Activated CD8-positive, alpha-beta T cell treated with anti-CD3 and anti-CD28 coated beads for 36 hours (primary cell): ENCODE measurements at regions of chr4 and their contacts with region 1.

Region 1: GRCh38 chr4:17544205-17544604 is 29.2 kb downstream of the CLRN2 start:
- DNase-seq: no peak
- ATAC-seq: no peak
- H3K4me3 Mint-ChIP-seq: no peak overlapping the region
- H3K27ac Mint-ChIP-seq: no peak overlapping the region
- H3K4me1 Mint-ChIP-seq: peaks cover 3% of the 10 kb centered on the region
- H3K27me3 Mint-ChIP-seq: peaks cover 5% of the 10 kb centered on the region
- CTCF ChIP-seq: no peak

Region 2: DNA sequence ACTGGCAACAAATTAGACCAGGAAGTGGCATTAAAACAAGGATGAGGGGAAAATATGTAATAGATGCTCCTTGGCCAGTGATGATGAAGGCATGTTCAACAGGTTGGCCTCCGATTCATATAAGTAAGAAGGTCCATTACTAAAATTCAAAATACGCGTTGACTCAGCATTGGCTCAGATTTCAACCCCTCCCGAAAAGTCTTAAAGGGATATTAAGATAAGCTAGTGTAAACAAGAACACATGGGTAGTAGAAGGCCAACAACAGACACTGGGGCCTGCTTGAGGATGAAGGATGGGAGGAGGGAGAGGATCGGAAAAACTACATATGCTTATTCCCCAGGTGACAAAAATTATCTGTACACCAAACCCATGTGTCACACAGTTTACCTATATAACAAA is 13.7 kb after region 1 on chr4:
- CTCF ChIA-PET with region 1: interaction called, 18 read pairs
- POLR2A ChIA-PET with region 1: no interaction called
- intact Hi-C with region 1: no loop called
- DNase-seq: no peak
- ATAC-seq: no peak
- H3K4me3 Mint-ChIP-seq: no peak overlapping the region
- H3K27ac Mint-ChIP-seq: no peak overlapping the region
- H3K4me1 Mint-ChIP-seq: no peaks in the 10 kb centered on the region
- H3K27me3 Mint-ChIP-seq: peaks cover 9% of the 10 kb centered on the region
- CTCF ChIP-seq: no peak

Region 3: GRCh38 chr4:17576932-17577665 is 32.9 kb after region 1 on chr4 and contains the start of gene LAP3:
- CTCF ChIA-PET with region 1: interaction called, 15 read pairs
- POLR2A ChIA-PET with region 1: no interaction called
- intact Hi-C with region 1: no loop called
- DNase-seq: peak; percentile 97
- ATAC-seq: peak; percentile 88
- H3K4me3 Mint-ChIP-seq: peak within 1 kb of the TSS; percentile 94
- H3K27ac Mint-ChIP-seq: peak within 1 kb of the TSS; percentile 93
- H3K4me1 Mint-ChIP-seq: peaks cover 23% of the 10 kb centered on the region
- H3K27me3 Mint-ChIP-seq: no peaks in the 10 kb centered on the region
- CTCF ChIP-seq: no peak
- total RNA-seq, gene LAP3: 100 to 101 TPM

Region 4: GRCh38 chr4:17636696-17637622 is 92.8 kb after region 1 on chr4:
- CTCF ChIA-PET with region 1: interaction called, 80 read pairs
- POLR2A ChIA-PET with region 1: interaction called, 4 read pairs
- intact Hi-C with region 1: loop called (anchors 2 kb)
- DNase-seq: peak; percentile 83
- ATAC-seq: peak; percentile 90
- H3K4me3 Mint-ChIP-seq: no peak overlapping the region
- H3K27ac Mint-ChIP-seq: no peak overlapping the region
- H3K4me1 Mint-ChIP-seq: no peaks in the 10 kb centered on the region
- H3K27me3 Mint-ChIP-seq: no peaks in the 10 kb centered on the region
- CTCF ChIP-seq: peak; percentile 97

Region 5: DNA sequence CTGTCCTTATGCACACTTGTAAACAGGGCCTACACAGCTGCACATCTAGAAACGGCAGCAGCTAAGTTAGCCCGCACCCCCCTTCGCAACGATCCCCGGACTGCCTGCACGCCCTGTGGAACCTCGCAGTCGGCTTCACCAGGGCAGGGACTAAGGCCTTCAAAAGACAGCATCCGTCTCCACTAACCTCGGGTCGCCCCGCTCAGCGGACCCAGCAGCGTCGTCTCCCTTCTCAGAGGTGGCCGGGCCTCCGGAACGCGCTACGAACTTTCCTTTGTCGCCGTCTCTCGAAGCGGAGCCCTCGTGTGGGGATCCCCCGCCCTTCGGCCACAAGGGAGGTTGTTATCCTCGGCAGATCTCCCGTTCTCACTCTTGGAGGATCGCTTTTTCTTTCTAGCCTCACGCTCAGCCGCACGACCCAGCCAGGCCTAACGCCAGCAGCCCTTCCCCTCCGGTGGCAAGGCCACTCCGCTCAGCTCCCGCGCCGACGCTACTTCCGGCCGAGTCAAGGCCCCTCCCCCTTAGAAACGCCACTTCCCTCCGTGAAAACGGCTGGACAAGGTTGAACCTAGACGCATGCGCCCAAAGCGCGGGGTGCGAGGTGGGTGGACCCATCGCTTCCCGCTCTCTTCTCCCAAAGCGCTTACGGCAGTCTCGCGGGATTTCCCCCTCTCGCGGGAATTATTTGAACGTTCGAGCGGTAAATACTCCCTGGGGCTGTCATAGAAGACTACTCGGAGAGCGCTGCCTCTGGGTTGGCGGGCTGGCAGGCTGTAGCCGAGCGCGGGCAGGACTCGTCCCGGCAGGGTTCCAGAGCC is 266.3 kb after region 1 on chr4 and contains the starts of genes DCAF16 and NCAPG:
- CTCF ChIA-PET with region 1: interaction called, 35 read pairs
- POLR2A ChIA-PET with region 1: no interaction called
- intact Hi-C with region 1: loop called (anchors 2 kb)
- DNase-seq: peak; percentile 100
- ATAC-seq: peak; percentile 93
- H3K4me3 Mint-ChIP-seq: peak within 1 kb of the TSS; percentile 94
- H3K27ac Mint-ChIP-seq: peak within 1 kb of the TSS; percentile 99
- H3K4me1 Mint-ChIP-seq: peaks cover 45% of the 10 kb centered on the region
- H3K27me3 Mint-ChIP-seq: peaks cover 2% of the 10 kb centered on the region
- CTCF ChIP-seq: no peak
- total RNA-seq, gene DCAF16: 42.4 to 44.5 TPM
- total RNA-seq, gene NCAPG: 63.3 to 65.9 TPM